HEK293 (cell line): ENCODE measurements at regions of chr2 and their contacts with region 1.

Region 1: GRCh38 chr2:240232961-240233893 is 92.8 kb upstream of the OTOS start:
- H3K4me3 ChIP-seq: peak overlapping the region; percentile 33
- H3K27ac ChIP-seq: no peak overlapping the region
- H3K4me1 ChIP-seq: no peaks in the 10 kb centered on the region
- CTCF ChIP-seq: peak; percentile 81

Region 2: GRCh38 chr2:240437861-240438809 is 204.9 kb after region 1 on chr2:
- CTCF ChIA-PET with region 1: interaction called, 20 read pairs
- POLR2A ChIA-PET with region 1: interaction called, 7 read pairs
- H3K4me3 ChIP-seq: no peak overlapping the region
- H3K27ac ChIP-seq: no peak overlapping the region
- H3K4me1 ChIP-seq: peaks cover 4% of the 10 kb centered on the region; the same call in 1 of the 2 replicates
- CTCF ChIP-seq: peak; percentile 93